Activated CD4-positive, alpha-beta T cell treated with anti-CD3 and anti-CD28 coated beads, Interleukin-2, amount 10 ng/mL, durations not matched to agents 24 days and 14 days (primary cell): ENCODE measurements at regions of chr4 and their contacts with region 1.

Region 1: GRCh38 chr4:101020956-101021355 is 326.4 kb downstream of the PPP3CA start:
- DNase-seq: peak; percentile 77
- H3K4me3 Mint-ChIP-seq: peak overlapping the region; percentile 66
- H3K27ac Mint-ChIP-seq: peak overlapping the region; percentile 82
- H3K4me1 Mint-ChIP-seq: peaks cover 42% of the 10 kb centered on the region
- H3K27me3 Mint-ChIP-seq: no peaks in the 10 kb centered on the region

Region 2: GRCh38 chr4:100100985-100101384 is 920.0 kb before region 1 on chr4:
- intact Hi-C with region 1: loop called (anchors 5 kb)
- DNase-seq: peak; percentile 62
- H3K4me3 Mint-ChIP-seq: peak overlapping the region; percentile 22
- H3K27ac Mint-ChIP-seq: peak overlapping the region; percentile 9
- H3K4me1 Mint-ChIP-seq: peaks cover 39% of the 10 kb centered on the region
- H3K27me3 Mint-ChIP-seq: no peaks in the 10 kb centered on the region

Region 3: GRCh38 chr4:101037938-101038413 is 17.0 kb after region 1 on chr4:
- intact Hi-C with region 1: loop called (anchors 2 kb)
- DNase-seq: peak; percentile 75
- H3K4me3 Mint-ChIP-seq: peak overlapping the region; percentile 17
- H3K27ac Mint-ChIP-seq: peak overlapping the region; percentile 30
- H3K4me1 Mint-ChIP-seq: peaks cover 9% of the 10 kb centered on the region
- H3K27me3 Mint-ChIP-seq: no peaks in the 10 kb centered on the region

Region 4: GRCh38 chr4:101155368-101155767 is 134.4 kb after region 1 on chr4:
- intact Hi-C with region 1: loop called (anchors 5 kb)
- DNase-seq: no peak
- H3K4me3 Mint-ChIP-seq: no peak overlapping the region
- H3K27ac Mint-ChIP-seq: no peak overlapping the region
- H3K4me1 Mint-ChIP-seq: peaks cover 22% of the 10 kb centered on the region
- H3K27me3 Mint-ChIP-seq: no peaks in the 10 kb centered on the region

Region 5: DNA sequence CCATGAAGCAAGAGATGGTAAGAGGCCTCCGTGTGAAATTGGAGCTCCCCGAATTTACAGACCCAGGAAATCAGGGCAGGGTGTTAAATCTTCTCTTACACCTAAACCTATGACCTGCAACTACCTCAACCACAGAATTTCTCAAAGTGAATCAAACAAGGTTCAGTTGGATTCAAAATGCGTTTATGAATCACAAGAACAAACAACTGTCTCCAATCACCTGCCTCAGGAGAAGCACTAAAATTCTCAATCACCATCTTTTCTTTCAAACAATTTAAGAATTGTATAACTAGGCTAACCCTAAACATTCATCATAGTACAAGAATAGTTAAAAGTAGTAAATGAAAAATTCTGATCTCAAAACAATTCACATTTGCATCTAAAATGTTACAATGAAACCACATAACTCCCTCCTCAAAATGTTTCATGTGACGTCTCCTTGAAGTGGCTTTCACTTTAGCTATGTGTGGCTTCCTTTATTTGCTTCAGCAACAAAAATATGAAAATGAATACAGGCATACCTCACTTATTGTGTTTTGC is 307.2 kb after region 1 on chr4:
- intact Hi-C with region 1: loop called (anchors 5 kb)
- DNase-seq: peak; percentile 76
- H3K4me3 Mint-ChIP-seq: peak overlapping the region; percentile 68
- H3K27ac Mint-ChIP-seq: peak overlapping the region; percentile 54
- H3K4me1 Mint-ChIP-seq: peaks cover 18% of the 10 kb centered on the region
- H3K27me3 Mint-ChIP-seq: peaks cover 37% of the 10 kb centered on the region